GM12878 (cell line): ENCODE measurements at regions of chr11 and their contacts with region 1.

Region 1: DNA sequence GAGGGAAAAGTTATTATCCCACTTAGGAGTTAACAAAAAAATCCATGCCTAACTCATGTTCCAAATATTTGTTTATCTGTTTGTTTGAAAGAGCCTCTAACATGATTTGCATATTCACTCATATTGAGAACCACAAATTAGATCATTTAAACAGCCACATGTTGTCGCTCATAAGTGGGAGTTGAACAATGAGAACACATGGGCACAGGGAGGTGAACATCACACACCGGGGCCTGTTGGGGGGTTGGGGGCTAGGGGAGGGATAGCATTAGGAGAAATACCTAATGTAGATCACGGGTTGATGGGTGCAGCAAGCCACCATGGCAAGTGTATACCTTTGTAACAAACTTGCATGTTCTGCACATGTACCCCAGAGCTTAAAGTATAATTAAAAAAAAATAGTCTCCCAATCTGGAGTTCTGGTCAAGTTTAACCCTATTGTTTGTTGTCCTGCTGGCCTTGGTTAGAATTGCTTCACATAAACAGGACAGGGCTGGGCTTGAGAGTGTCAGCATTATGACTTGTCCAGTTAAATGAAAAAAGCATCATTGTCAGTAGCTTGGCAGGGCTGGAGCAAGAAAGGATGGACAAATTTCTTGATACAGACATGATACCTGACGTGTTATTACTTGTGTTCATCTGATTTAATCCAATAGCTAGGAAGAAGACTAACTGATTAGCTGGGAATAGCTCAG is 57.8 kb upstream of the PSMA1 start:
- DNase-seq: no peak
- ATAC-seq: peak; percentile 75
- H3K4me3 ChIP-seq: no peak overlapping the region
- H3K27ac ChIP-seq: no peak overlapping the region
- H3K4me1 ChIP-seq: peaks cover 5% of the 10 kb centered on the region
- H3K27me3 ChIP-seq: no peaks in the 10 kb centered on the region
- CTCF ChIP-seq: no peak
- EP300 ChIP-seq: no peak
- POLR2A ChIP-seq: no peak
- RAD21 ChIP-seq: no peak

Region 2: GRCh38 chr11:14544611-14545010 is 33.4 kb before region 1 on chr11:
- CTCF ChIA-PET with region 1: no interaction called
- POLR2A ChIA-PET with region 1: no interaction called
- RAD21 ChIA-PET with region 1: no interaction called
- SMC1A ChIA-PET with region 1: no interaction called
- in situ Hi-C with region 1: no loop called
- intact Hi-C with region 1: loop called (anchors 2 kb)
- DNase-seq: peak; percentile 17
- ATAC-seq: peak; percentile 90
- H3K4me3 ChIP-seq: no peak overlapping the region
- H3K27ac ChIP-seq: no peak overlapping the region
- H3K4me1 ChIP-seq: no peaks in the 10 kb centered on the region
- H3K27me3 ChIP-seq: no peaks in the 10 kb centered on the region
- CTCF ChIP-seq: no peak
- EP300 ChIP-seq: peak in 1 of 2 experiments; percentile 50; a peak in 1 of 4 replicates
- POLR2A ChIP-seq: no peak
- RAD21 ChIP-seq: no peak